Activated T-helper 2 cell treated with anti-CD3 and anti-CD28 coated beads, Interferon-gamma antibody, Interleukin-2, Interleukin-4, amounts not matched to agents 10 μg/mL and 5 μg/mL and 100 μg/mL, durations not matched to agents 14 hours and 24 hours and 36 hours (primary cell): ENCODE measurements at regions of chr16 and their contacts with region 1.

Region 1: DNA sequence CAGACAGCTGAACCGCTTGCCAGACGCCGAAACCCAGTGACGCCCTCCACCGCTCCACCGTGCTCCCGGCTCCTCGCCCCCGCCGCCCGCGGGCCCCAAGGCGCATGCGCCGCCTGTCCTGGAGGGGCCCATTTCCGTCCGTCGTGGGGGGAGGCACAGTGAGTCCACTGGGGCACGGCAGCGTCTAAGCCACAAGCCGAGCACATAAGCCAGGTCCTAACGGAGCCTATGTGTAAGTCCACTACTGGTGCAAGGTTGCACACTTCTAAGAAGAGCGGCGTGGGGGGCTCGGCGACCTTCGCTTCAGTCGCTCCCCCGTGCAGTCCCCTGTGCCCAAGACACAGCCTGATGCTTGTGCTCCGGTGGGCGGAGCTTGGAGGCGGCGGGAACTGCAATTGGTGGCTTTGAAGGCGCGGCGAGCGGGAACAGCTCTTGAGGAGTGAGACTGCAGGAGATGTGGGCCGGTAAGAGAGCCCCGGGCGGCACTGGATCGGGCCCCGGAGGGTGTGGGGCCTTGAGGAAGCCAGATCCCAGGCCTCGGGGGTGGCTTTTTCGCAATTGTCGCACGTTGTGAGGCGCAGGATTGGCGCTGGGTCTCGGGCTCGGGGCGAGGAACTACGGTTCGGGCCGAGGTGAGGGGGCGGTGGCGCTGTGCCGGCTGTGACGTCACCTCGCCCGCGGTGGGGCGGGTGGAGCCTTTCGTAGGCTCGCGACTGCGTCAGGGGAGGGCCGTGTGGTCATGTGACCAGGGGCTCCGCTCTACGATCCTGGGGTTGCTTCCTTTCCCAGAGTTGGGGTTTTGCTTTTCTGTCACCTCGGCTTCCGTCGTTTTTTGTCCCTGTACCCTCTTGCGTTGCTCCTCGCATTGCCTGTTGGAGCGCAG is at the starts of genes CENPN and CMC2:
- DNase-seq: peak; percentile 98
- H3K4me3 Mint-ChIP-seq: peak within 1 kb of the TSS; percentile 96
- H3K27ac Mint-ChIP-seq: peak within 1 kb of the TSS; percentile 100
- H3K4me1 Mint-ChIP-seq: peaks cover 46% of the 10 kb centered on the region
- H3K27me3 Mint-ChIP-seq: no peaks in the 10 kb centered on the region
- total RNA-seq, gene CENPN: 57.4 and 57.9 TPM in 2 replicates
- total RNA-seq, gene CMC2: 130 and 136 TPM in 2 replicates

Region 2: GRCh38 chr16:80656711-80657150 is 350.3 kb before region 1 on chr16:
- intact Hi-C with region 1: loop called (anchors 10 kb)
- DNase-seq: peak; percentile 53
- H3K4me3 Mint-ChIP-seq: peak overlapping the region; percentile 81
- H3K27ac Mint-ChIP-seq: peak overlapping the region; percentile 75
- H3K4me1 Mint-ChIP-seq: peaks cover 34% of the 10 kb centered on the region
- H3K27me3 Mint-ChIP-seq: peaks cover 3% of the 10 kb centered on the region

Region 3: GRCh38 chr16:80948886-80949493 is 58.1 kb before region 1 on chr16:
- intact Hi-C with region 1: loop called (anchors 5 kb)
- DNase-seq: no peak
- H3K4me3 Mint-ChIP-seq: no peak overlapping the region
- H3K27ac Mint-ChIP-seq: no peak overlapping the region
- H3K4me1 Mint-ChIP-seq: peaks cover 22% of the 10 kb centered on the region
- H3K27me3 Mint-ChIP-seq: peaks cover 4% of the 10 kb centered on the region

Region 4: DNA sequence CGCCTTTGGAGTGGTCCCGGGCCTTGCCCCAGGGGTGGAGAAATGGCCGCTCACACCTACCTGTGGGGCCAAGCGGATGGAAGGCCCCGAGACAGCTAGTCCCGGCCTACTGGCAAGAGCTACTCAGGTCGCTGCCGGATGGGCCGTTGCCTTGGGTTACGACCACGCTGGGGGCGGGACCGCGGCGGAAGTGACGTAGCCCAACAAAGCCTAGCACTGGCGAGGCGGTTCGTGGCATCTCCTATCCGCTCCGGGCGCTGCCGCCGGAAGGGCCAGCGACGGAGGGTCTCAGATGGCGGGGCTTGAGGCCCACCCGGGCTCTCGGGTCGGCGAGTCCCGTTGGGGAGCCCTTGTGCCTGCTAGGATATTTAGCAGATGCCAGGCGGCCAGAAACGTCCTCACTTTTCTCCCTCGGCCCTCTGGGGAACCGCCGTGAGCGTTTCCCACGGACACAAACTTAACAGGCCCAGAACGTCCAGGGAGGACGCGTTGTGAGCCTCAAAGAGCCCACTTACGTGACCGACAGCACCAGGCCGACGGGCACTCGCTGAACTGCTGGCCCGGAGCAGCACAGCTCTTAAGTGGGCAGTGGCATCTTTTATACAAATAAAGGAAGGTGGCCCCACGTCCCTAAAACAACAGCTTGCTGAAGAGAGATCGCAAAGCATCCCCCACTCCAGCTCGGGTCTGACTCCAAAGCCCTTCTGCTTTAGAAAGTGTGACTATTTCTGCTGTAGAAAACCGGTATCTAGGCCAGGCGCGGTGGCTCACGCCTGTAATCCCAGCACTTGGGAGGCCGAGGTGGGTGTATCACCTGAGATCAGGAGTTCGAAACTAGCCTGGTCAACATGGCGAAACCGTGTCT is 70.3 kb after region 1 on chr16 and contains the start of gene C16orf46:
- intact Hi-C with region 1: loop called (anchors 1 kb)
- DNase-seq: peak; percentile 96
- H3K4me3 Mint-ChIP-seq: peak within 1 kb of the TSS; percentile 22
- H3K27ac Mint-ChIP-seq: no peak within 1 kb of the TSS
- H3K4me1 Mint-ChIP-seq: peaks cover 3% of the 10 kb centered on the region
- H3K27me3 Mint-ChIP-seq: peaks cover 6% of the 10 kb centered on the region
- total RNA-seq, gene C16orf46: 0.11 and 0.32 TPM in 2 replicates

Region 5: GRCh38 chr16:81106811-81107503 is 99.9 kb after region 1 on chr16:
- intact Hi-C with region 1: no loop called
- DNase-seq: no peak
- H3K4me3 Mint-ChIP-seq: no peak overlapping the region
- H3K27ac Mint-ChIP-seq: no peak overlapping the region
- H3K4me1 Mint-ChIP-seq: no peaks in the 10 kb centered on the region
- H3K27me3 Mint-ChIP-seq: no peaks in the 10 kb centered on the region

Region 6: GRCh38 chr16:81616321-81617055 is 609.4 kb after region 1 on chr16:
- intact Hi-C with region 1: loop called (anchors 5 kb)
- DNase-seq: peak; percentile 63
- H3K4me3 Mint-ChIP-seq: peak overlapping the region; percentile 49
- H3K27ac Mint-ChIP-seq: peak overlapping the region; percentile 91
- H3K4me1 Mint-ChIP-seq: peaks cover 11% of the 10 kb centered on the region
- H3K27me3 Mint-ChIP-seq: no peaks in the 10 kb centered on the region